ENCODE measurements at regions of chr15 and their contacts with region 1.

Region 1: GRCh38 chr15:68578174-68578979 is 416 bp upstream of the CORO2B start:
- DNase-seq: peak; percentile 72 to 89 (median 80)
- H3K4me3 ChIP-seq: peak overlapping the region; percentile 54 to 89 (median 77)
- H3K27ac ChIP-seq: peak overlapping the region; percentile 65 to 98 (median 96)
- H3K27me3 ChIP-seq: no peaks in the 10 kb centered on the region
- CTCF ChIP-seq: peak in 55 of 56 donors; percentile 49 to 94 (median 74)

Region 2: DNA sequence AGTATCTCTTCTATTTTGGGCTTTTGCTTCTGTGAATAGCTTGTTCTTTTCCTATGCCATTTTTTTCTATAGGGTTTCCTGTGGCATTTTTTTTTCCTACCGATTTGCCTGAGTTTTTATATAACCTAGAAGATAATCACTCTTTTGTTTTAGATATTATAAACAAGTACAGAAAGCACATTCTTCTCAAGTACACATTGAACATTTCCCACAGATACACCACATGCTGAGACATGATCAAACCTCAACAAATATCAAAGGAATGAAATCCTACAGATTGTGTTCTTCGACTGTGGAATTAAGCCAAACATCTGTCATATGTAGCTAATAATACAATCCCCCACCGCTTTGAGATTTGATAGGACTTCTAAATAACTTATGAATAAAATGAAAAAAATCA is 310.0 kb before region 1 on chr15:
- intact Hi-C with region 1: no loop called
- DNase-seq: no peak
- H3K4me3 ChIP-seq: no peak overlapping the region
- H3K27ac ChIP-seq: peak overlapping the region in 26 of 59 donors; percentile 3 to 73 (median 45)
- H3K27me3 ChIP-seq: peaks cover 0 to 3% (median 0%) of the 10 kb centered on the region in 45 donors
- CTCF ChIP-seq: no peak

Region 3: DNA sequence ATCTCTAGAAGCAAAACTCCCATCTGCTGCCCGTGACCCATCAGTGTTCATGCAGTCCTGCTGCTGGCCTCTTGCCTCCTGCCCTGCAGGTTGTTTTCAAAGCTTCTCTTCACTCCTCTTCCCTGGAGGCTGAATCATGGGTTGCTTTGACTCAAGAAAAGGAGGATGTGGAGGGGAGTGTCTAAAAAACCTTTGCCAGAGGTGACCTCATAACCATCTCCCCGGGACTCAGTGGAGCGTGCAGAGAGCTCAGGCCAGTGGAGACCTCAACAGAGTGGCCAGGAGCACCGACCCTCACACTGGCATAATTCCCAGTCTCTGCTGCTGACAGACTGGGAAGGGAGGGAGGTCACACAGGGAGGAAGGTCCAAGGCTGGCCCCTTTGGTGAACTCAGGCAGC is 85.5 kb before region 1 on chr15:
- intact Hi-C with region 1: no loop called
- DNase-seq: no peak
- H3K4me3 ChIP-seq: no peak overlapping the region
- H3K27ac ChIP-seq: no peak overlapping the region
- H3K27me3 ChIP-seq: peaks cover 0 to 6% (median 0%) of the 10 kb centered on the region in 45 donors
- CTCF ChIP-seq: no peak

Region 4: DNA sequence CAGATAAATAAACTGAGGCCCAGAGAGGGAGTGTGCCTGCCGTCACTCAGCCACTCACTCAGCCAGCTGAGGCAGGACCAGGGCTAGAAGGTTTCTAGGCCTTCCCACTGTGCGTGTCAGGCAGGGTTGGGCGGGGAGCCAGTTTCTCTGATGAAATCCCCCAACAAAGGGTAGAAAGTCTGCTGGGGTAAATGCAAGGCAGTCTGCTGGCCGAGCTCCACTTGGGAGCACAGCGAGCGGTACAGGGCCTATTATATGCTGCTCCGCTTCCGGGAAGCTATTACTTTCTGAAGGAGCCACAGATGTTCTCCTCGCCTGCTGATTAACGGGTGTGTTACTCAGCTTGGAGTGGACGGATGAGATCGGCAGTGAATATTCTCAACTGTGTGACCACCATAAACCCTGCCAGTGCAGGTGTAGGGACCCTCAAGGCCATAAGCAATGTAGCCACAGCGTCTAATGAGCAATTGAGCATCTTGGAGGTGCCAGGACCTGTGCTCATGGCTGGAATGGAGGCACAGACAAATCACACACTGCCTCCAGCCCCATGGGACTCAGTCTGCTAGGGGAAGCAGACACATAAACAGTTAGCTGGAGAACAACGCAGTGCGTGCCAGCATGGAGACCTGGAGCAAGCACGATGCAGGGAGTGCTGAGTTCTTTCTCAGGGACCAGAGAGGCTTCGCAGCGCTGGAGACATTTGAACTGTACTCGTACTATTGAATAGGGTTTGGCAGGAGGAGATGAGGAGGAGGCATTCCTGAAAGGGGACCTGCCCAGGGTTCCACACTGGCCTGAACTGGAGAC is 42.5 kb after region 1 on chr15:
- intact Hi-C with region 1: loop called in 1 of 2 experiments (anchors 2 kb)
- DNase-seq: peak; percentile 72 to 93 (median 90)
- H3K4me3 ChIP-seq: peak overlapping the region in 23 of 59 donors; percentile 1 to 42 (median 24)
- H3K27ac ChIP-seq: peak overlapping the region; percentile 68 to 100 (median 98)
- H3K27me3 ChIP-seq: no peaks in the 10 kb centered on the region
- CTCF ChIP-seq: peak in 7 of 56 donors; percentile 11 to 27 (median 17)

Region 5: DNA sequence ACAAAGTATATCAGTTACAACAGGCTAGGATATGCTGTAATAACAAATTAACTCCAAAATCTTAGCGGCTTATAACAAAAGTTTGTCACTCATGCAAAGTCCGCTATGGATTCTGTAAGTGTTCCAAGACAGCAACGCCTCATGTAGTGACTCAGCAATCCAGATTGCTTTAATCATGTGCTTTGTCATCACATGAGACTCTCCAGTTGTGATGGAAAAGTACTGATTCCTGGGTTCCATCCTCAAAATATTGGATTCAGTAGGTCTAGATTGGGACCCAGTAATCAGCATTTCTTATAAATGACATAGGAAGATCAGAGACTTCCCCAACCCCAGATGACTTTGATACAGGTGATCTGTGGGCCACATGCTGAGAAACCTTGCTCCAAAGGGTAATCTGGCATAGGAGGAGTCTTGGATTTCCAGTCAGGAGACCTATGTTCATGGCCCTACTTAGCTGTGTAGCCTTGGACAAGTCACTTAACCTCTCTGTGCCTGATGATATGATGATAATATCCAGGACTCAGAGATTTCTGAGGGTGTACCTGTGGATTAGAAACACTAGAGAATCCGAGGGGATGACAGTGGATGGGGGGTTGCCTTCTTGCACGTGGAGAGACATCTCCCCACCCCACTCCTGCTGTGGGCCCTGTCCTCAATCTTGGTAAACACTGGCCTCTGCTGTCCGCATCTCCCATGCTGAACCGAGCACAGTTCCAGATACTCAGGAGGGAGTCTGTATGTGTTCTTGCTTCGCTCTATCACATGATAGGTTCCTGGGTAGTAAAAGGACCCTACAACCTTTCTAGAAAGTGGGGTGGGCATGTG is 65.9 kb after region 1 on chr15:
- intact Hi-C with region 1: loop called in 1 of 2 experiments (anchors 5 kb)
- DNase-seq: peak in 5 of 10 donors; percentile 8 to 43 (median 35)
- H3K4me3 ChIP-seq: no peak overlapping the region
- H3K27ac ChIP-seq: peak overlapping the region in 56 of 59 donors; percentile 11 to 90 (median 81)
- H3K27me3 ChIP-seq: no peaks in the 10 kb centered on the region
- CTCF ChIP-seq: peak in 42 of 56 donors; percentile 14 to 64 (median 38)

Region 6: DNA sequence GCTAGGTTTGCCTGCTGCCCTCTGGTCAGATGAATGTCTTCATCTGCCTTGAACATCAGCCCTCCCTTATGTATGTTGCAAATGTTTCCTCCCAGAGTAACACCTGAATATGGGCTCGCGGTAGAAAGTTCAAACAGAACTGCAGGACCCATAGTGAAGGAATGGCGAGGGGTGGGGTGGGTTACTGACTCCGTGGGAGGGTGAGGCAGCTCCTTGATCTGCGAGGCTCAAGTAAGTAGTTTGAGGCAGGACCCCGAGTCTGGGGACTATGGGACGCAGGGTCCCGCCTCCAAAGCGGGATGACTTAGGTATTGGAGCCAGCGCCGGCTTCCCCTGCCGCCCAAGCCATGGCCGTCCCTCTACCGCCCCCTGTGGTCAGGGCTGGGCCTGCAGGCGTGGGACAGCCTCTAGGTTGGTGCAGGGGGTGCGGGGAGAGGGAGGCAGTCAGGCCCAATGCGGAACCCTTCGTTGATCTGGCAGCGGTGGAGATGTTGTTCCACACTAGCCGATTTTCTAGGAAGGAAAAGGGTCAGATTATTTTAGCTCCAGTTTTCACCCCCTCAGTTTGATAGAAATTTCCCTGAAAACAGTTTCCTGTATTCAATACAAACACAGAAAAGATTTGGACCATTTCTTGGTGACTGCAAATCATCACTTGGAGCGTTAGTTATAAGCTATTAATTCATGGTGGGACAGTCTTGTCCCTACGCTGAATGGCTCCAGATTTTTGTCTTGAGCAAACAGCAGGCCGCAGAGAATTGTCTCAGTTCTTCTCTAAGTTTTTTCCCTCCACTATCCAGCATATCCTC is 72.7 kb after region 1 on chr15:
- intact Hi-C with region 1: loop called in 1 of 2 experiments (anchors 5 kb)
- DNase-seq: peak in 7 of 10 donors; percentile 44 to 66 (median 63)
- H3K4me3 ChIP-seq: peak overlapping the region in 2 of 59 donors; percentile 8 to 21
- H3K27ac ChIP-seq: peak overlapping the region; percentile 42 to 98 (median 92)
- H3K27me3 ChIP-seq: no peaks in the 10 kb centered on the region
- CTCF ChIP-seq: peak; percentile 24 to 80 (median 66)